B cell (primary cell): ENCODE measurements at regions of chr1 and their contacts with region 1.

Region 1: GRCh38 chr1:207282058-207282457 is 39.4 kb upstream of the CD55 start:
- DNase-seq: no peak
- ATAC-seq: peak; percentile 28
- H3K4me3 ChIP-seq: peak overlapping the region in 1 of 5 experiments; percentile 28
- H3K4me3 Mint-ChIP-seq: peak overlapping the region; percentile 66
- H3K27ac ChIP-seq: peak overlapping the region; percentile 28 to 50
- H3K27ac Mint-ChIP-seq: peak overlapping the region; percentile 48
- H3K4me1 ChIP-seq: peaks cover 38 to 40% of the 10 kb centered on the region in 2 donors
- H3K4me1 Mint-ChIP-seq: peaks cover 47% of the 10 kb centered on the region
- H3K27me3 ChIP-seq: no peaks in the 10 kb centered on the region
- H3K27me3 Mint-ChIP-seq: peaks cover under 1% of the 10 kb centered on the region
- CTCF ChIP-seq: no peak

Region 2: DNA sequence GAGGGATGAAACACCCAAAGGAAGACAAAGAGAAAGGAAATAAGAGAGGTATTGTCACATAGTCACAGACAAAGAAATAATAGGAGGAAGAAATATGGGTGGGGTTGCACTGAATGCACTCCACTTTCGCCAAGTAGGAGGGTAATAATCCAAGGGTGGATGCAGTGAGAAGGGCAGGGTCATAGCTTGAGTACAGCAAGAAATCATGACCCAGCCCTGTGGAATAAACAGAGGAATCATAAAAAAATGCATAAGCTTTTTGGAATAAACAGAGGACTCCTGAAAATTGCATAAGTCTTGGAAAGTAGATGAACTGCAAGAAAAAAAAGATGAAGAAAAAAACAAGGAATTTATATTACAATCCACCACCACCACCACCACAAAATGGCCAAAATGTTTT is 13.7 kb before region 1 on chr1:
- CTCF ChIA-PET with region 1: no interaction called
- POLR2A ChIA-PET with region 1: interaction called, 3 read pairs
- intact Hi-C with region 1: loop called (anchors 2 kb)
- DNase-seq: no peak
- ATAC-seq: no peak
- H3K4me3 ChIP-seq: no peak overlapping the region
- H3K4me3 Mint-ChIP-seq: no peak overlapping the region
- H3K27ac ChIP-seq: no peak overlapping the region
- H3K27ac Mint-ChIP-seq: no peak overlapping the region
- H3K4me1 ChIP-seq: peaks cover 0 to under 1% of the 10 kb centered on the region in 2 donors
- H3K4me1 Mint-ChIP-seq: peaks cover 5% of the 10 kb centered on the region
- H3K27me3 ChIP-seq: no peaks in the 10 kb centered on the region
- H3K27me3 Mint-ChIP-seq: no peaks in the 10 kb centered on the region
- CTCF ChIP-seq: no peak